Activated CD4-positive, alpha-beta memory T cell treated with anti-CD3 and anti-CD28 coated beads, Interleukin-2, amount 10 ng/mL, durations not matched to agents 7 days and 5 days (primary cell): ENCODE measurements at regions of chr15 and their contacts with region 1.

Region 1: GRCh38 chr15:91032919-91033803 is 10.8 kb upstream of the VPS33B start:
- DNase-seq: peak; percentile 69
- H3K4me3 Mint-ChIP-seq: no peak overlapping the region
- H3K27ac Mint-ChIP-seq: no peak overlapping the region
- H3K4me1 Mint-ChIP-seq: peaks cover 4% of the 10 kb centered on the region
- H3K27me3 Mint-ChIP-seq: peaks cover 5% of the 10 kb centered on the region

Region 2: DNA sequence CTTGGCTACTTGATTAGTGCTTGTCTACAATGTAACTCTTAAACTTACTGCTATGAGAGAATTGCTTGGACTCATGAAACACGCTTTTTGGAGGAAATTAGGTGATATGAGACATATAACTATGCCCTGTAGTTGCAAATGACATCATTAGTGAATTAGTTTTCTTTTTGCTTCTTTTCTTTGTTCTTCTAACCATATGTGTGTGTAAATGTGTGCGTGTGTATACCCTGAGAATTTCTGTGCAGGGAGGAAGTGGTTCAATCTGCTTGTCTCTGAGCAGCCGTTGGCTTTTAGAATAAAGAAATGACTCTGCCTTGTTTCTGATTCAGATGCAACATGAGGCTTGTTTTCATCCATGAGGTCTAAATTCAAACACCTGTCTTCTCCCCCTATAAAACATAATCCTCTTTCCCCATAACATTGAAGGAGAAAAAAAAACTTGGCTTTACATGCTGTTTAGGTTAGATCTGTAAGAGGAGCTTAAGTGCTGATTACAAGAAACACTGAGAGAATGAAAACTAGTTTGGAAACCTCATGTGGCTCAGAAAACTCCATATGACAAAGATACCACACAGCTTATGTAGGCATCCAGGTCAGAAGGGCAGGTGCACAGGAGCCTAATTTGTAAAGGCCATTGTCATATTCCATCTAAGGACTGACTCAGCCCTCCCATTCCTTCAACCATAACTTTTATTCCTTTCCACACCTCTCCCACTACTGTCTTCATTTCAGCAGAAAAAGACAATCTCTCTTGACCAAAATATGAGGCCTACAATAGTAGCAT is 346.5 kb before region 1 on chr15:
- CTCF ChIA-PET with region 1: no interaction called
- POLR2A ChIA-PET with region 1: no interaction called
- DNase-seq: peak; percentile 56
- H3K4me3 Mint-ChIP-seq: peak overlapping the region; percentile 15
- H3K27ac Mint-ChIP-seq: peak overlapping the region; percentile 100
- H3K4me1 Mint-ChIP-seq: peaks cover 54% of the 10 kb centered on the region
- H3K27me3 Mint-ChIP-seq: no peaks in the 10 kb centered on the region

Region 3: DNA sequence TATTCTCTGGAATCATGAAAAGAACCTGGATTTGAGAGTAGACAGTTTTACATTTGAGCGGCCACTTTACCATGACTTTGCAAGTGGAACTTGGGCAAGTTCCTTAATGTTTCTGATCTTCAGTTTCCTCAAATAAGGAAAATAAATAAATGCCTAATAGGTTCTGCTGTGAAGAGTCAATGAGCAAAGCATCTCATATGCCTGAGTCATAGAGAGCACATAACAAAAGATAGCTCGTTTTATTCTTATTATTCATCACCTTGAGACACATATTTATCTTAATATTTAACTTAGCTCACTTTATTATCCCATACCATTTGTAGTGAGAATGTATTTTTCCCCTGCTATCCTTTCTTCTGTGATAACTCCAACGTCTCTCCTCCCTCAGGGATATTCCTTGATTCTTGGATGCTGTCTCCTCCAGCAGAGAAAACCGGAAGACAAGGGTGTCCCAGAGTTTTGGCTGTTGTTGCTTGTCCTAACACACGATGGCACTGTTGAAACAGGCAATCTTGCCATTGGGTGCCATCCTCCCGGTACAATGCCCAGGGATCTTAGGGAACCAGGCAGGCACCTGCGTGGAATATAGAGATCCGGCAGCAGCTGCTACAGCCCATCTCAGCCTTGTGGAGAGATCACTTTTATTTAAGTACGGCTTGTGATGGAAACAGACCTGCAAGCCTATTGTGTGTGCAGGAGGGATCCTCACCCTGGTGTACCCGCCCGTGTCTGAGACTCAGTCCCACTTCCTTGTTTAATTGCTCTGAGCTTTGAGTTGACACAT is 22.6 kb after region 1 on chr15:
- CTCF ChIA-PET with region 1: interaction called, 10 read pairs
- POLR2A ChIA-PET with region 1: no interaction called
- DNase-seq: peak; percentile 38
- H3K4me3 Mint-ChIP-seq: no peak overlapping the region
- H3K27ac Mint-ChIP-seq: no peak overlapping the region
- H3K4me1 Mint-ChIP-seq: no peaks in the 10 kb centered on the region
- H3K27me3 Mint-ChIP-seq: peaks cover 74% of the 10 kb centered on the region

Region 4: DNA sequence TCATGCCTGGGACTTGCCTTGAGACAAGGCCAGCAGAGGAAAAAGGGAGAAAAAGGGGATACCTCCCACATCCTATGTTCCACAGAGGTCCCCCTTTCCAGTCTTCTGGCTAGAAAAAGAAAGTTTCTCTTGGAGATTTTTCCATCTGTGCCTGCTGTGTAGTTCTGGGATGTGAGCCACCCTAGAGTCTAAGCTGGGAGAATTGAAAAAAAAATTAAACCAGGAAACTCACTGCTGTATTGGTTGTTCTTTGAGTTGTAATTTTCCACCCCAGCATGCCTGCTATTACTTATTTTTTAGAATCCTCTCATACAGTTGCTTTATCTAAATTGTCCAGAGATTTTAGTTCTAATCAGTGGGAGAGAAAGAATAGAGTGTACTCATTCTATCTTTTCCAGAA is 135.3 kb after region 1 on chr15:
- CTCF ChIA-PET with region 1: no interaction called
- POLR2A ChIA-PET with region 1: no interaction called
- DNase-seq: no peak
- H3K4me3 Mint-ChIP-seq: no peak overlapping the region
- H3K27ac Mint-ChIP-seq: no peak overlapping the region
- H3K4me1 Mint-ChIP-seq: no peaks in the 10 kb centered on the region
- H3K27me3 Mint-ChIP-seq: peaks cover 8% of the 10 kb centered on the region

Region 5: DNA sequence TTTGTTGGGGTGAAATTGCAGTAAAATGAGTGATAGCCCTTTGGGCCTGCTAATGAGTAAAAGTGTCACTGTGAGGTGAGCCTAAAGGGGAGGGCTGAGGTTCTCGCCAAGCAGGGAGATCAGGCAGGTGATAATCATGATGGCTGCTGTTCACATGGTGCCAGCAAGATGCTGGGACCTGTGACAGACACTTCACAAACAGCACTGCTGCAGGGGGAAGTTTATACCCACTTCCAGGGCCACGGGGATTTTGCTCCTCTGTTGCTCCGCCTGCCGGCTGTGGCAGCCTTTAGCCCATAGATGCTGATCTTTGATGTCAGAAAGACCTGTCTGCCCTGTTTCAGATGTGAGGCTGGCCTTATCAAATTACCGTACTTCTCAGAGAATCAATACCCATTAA is 163.6 kb after region 1 on chr15:
- CTCF ChIA-PET with region 1: no interaction called
- POLR2A ChIA-PET with region 1: no interaction called
- DNase-seq: no peak
- H3K4me3 Mint-ChIP-seq: no peak overlapping the region
- H3K27ac Mint-ChIP-seq: no peak overlapping the region
- H3K4me1 Mint-ChIP-seq: no peaks in the 10 kb centered on the region
- H3K27me3 Mint-ChIP-seq: peaks cover 5% of the 10 kb centered on the region